IMR-90 (cell line): ENCODE measurements at regions of chr1 and their contacts with region 1.

Region 1: GRCh38 chr1:243287652-243288051 is 31.8 kb downstream of the SDCCAG8 start:
- DNase-seq: peak; percentile 93
- ATAC-seq: peak; percentile 67
- H3K4me3 ChIP-seq: no peak overlapping the region
- H3K27ac ChIP-seq: peak overlapping the region; percentile 27; the same call in 1 of the 2 replicates
- H3K4me1 ChIP-seq: peaks cover 14% of the 10 kb centered on the region
- H3K27me3 ChIP-seq: no peaks in the 10 kb centered on the region
- CTCF ChIP-seq: no peak
- POLR2A ChIP-seq: no peak
- RAD21 ChIP-seq: no peak

Region 2: DNA sequence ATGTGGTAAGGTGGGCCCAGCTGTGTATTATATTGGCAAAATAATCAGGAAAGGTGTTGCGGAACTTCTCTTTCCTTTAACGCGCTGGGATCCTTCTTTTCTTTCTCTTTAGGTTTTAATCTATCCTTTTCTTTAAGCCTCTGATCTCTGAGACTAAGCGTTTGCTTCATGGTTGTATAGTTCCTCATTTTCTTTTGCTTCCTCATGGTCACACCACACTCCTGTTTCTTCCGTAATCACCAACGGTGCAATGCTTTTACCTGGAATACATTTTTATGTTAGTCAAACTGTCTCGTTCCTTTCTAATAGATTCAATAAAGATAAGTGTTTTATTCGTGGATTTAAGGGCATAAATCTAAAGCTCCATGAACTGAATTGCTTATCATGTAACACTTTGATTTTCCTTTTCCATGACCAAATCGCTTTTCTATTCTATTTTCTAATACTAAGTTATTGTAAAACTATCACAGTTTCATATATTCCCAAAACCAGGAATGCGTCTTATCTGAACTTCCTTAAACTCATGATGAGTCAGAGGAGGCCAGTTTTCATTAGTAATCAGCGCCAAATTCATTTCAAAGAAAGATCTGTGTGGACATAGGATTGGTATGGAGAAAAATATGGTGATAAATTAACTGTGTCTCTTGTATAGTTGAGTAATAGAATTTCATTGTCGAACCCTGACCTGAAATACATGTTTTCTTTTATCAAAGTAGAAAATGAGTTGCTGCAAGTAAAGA is 19.6 kb before region 1 on chr1:
- CTCF ChIA-PET with region 1: interaction called, 6 read pairs
- POLR2A ChIA-PET with region 1: interaction called, 3 read pairs
- dilution Hi-C with region 1: no loop called
- in situ Hi-C with region 1: no loop called
- intact Hi-C with region 1: loop called (anchors 2 kb)
- DNase-seq: peak; percentile 96
- ATAC-seq: peak; percentile 55
- H3K4me3 ChIP-seq: no peak overlapping the region
- H3K27ac ChIP-seq: peak overlapping the region; percentile 56
- H3K4me1 ChIP-seq: peaks cover 22% of the 10 kb centered on the region
- H3K27me3 ChIP-seq: no peaks in the 10 kb centered on the region
- CTCF ChIP-seq: no peak
- POLR2A ChIP-seq: no peak
- RAD21 ChIP-seq: no peak